ENCODE measurements at regions of chr9 and their contacts with region 1.

Region 1: GRCh38 chr9:101601904-101602765 is 7.4 kb upstream of the PPP3R2 start:
- DNase-seq: no peak
- ATAC-seq: no peak
- H3K4me3 Mint-ChIP-seq: no peak overlapping the region
- H3K27ac Mint-ChIP-seq: no peak overlapping the region
- H3K4me1 Mint-ChIP-seq: peaks cover 3% of the 10 kb centered on the region
- H3K27me3 Mint-ChIP-seq: peaks cover 7% of the 10 kb centered on the region

Region 2: DNA sequence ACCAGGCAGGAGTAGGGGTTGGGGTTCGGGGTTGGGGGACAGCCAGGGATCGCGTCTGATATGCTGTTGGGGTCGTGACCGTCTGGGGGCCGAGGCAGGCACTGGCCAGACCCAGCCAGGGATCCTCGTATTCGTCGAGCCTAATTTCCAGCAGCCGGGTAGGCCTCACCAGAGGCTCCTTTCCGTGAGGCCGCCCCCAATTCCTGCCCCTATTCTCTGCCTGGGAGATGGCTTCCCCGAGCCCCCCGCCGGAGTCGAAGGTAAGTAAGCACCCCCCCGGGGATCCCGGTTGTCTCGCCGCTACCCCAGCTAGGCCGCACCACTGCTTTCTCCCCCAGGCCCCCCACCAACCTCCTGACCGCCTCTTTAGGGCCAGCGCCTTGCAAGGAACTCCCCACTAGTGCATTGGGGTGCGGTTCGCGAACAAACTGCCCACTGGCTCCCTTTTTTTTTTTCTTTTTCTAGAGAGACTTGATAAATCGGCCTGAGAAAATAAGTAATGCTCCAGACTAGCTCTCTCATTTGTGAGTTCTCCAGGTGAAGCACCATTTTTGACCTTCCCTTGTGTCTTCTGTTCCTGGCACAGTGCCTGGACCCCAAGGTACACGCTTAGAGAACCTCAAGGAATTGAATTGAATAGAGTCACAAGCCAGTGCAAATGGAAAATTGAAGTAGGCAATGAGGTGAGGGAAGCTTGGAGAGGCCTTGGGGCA is 203.0 kb before region 1 on chr9:
- CTCF ChIA-PET with region 1: no interaction called
- POLR2A ChIA-PET with region 1: no interaction called
- intact Hi-C with region 1: no loop called
- DNase-seq: no peak
- ATAC-seq: peak; percentile 1
- H3K4me3 Mint-ChIP-seq: peak overlapping the region; percentile 94
- H3K27ac Mint-ChIP-seq: peak overlapping the region; percentile 100
- H3K4me1 Mint-ChIP-seq: peaks cover 67% of the 10 kb centered on the region
- H3K27me3 Mint-ChIP-seq: no peaks in the 10 kb centered on the region

Region 3: DNA sequence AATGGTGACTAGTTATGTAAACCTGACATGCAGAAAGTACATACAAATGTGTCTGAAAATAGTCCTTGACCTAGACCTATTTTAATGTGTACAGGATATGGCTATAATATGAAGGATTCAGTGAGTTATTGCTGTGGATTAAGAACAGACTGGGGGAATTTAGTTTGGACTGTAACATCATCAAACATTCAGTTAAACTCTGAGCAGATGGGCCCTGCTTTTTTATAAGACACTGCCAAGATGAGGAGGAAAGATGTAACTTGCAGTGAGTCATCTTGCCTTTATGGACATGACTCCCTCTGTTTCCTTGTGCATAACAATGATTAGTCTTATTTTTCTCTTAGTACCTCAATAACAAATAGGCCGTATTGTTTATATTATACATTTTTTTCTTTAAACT is 19.6 kb before region 1 on chr9:
- CTCF ChIA-PET with region 1: no interaction called
- POLR2A ChIA-PET with region 1: no interaction called
- intact Hi-C with region 1: no loop called
- DNase-seq: no peak
- ATAC-seq: no peak
- H3K4me3 Mint-ChIP-seq: no peak overlapping the region
- H3K27ac Mint-ChIP-seq: no peak overlapping the region
- H3K4me1 Mint-ChIP-seq: peaks cover 10% of the 10 kb centered on the region
- H3K27me3 Mint-ChIP-seq: peaks cover 6% of the 10 kb centered on the region

Region 4: DNA sequence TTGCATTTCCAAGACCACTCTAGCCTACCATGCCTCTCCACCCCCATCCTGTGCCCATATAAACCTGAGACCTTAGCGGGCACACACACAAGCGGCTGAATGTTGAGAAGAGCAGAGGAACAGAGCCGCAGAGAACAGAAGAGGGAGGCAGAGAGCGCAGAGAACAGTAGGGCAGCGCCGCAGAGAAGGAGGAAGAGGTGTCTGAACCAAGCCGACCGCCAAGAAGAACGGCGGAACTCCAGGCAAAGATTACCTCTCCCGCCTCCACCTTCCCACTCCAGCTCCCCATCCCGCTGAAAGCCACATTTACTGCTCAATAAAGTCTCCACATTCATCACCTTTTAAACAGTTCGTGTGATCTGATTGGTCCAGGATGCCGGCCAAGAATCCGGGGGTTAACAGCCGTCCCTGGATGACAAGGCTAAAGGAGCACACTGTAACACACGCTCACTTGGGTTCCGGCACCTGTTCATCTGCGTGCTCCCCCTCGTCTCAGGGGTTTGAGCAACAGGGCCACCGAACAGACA is 103.1 kb after region 1 on chr9:
- CTCF ChIA-PET with region 1: no interaction called
- POLR2A ChIA-PET with region 1: no interaction called
- intact Hi-C with region 1: loop called in 1 of 2 experiments (anchors 5 kb)
- DNase-seq: peak; percentile 54
- ATAC-seq: peak; percentile 92
- H3K4me3 Mint-ChIP-seq: peak overlapping the region; percentile 59
- H3K27ac Mint-ChIP-seq: no peak overlapping the region
- H3K4me1 Mint-ChIP-seq: peaks cover 4% of the 10 kb centered on the region
- H3K27me3 Mint-ChIP-seq: peaks cover 15% of the 10 kb centered on the region

Region 5: DNA sequence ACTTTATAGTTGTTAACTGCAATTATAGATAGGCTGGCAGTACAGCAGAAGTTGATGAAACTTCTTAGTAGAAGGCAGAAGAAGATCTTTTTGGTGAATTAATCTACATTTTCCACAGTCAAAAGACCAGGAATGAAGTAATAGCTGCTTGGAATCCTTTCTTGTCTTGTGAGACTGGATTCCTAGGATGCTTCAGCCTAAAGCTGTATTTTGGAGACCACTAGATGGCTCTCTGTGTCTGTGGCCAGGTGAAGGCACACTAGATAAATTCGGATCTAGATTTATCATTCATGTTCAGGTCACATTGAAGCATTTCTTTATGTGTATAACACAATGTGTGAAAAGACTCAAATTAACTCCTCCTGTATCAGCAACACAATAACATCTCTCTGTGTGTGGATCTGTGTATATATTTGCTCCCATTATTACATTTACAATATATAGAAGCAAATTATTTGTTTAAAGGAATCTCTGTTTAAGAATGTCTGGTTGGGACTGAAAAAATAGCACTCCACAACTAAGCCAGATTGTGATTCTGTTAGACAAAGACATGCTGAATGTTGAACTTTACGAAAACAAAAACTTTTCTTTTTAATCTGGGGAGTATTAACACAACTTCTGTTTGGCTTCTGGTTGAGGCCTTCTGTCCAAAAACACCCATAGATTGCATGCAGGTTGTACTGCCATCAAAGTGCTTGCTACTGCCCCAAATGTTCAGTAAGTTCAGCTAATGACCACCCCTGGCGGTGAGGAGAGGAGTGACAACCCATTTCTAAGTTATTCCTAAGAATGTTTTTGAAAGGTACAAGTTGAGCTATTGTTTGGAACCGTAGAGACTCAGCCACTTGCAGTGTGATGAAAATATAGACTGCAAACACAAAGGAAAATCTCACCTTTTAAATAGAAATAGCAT is 125.7 kb after region 1 on chr9:
- CTCF ChIA-PET with region 1: no interaction called
- POLR2A ChIA-PET with region 1: no interaction called
- intact Hi-C with region 1: loop called (anchors 1 to 5 kb)
- DNase-seq: peak; percentile 34
- ATAC-seq: no peak
- H3K4me3 Mint-ChIP-seq: no peak overlapping the region
- H3K27ac Mint-ChIP-seq: no peak overlapping the region
- H3K4me1 Mint-ChIP-seq: no peaks in the 10 kb centered on the region
- H3K27me3 Mint-ChIP-seq: peaks cover 15% of the 10 kb centered on the region

Region 6: DNA sequence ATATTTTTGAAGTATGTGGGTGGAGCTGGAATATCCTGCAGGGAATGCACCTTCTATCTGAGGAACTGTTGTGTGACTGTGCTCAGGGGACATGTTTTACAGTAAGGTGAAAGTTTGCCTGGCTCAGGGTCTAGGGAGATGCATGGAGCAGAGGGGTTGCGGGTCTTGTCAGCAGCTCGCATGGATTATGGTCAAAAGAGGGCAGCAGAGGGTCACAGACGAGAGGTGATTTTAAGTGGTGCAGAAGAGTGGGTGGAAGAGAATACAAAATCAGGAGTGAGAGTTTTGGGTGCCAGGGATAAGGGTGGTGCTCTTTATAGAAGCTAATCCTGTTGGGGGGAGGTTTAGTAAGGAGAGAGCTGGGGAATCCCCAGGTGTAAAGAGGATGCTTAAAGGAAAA is 189.8 kb after region 1 on chr9:
- CTCF ChIA-PET with region 1: no interaction called
- POLR2A ChIA-PET with region 1: no interaction called
- intact Hi-C with region 1: loop called in 1 of 2 experiments (anchors 10 kb)
- DNase-seq: peak; percentile 48
- ATAC-seq: no peak
- H3K4me3 Mint-ChIP-seq: no peak overlapping the region
- H3K27ac Mint-ChIP-seq: no peak overlapping the region
- H3K4me1 Mint-ChIP-seq: no peaks in the 10 kb centered on the region
- H3K27me3 Mint-ChIP-seq: no peaks in the 10 kb centered on the region

Region 7: GRCh38 chr9:101814064-101814463 is 211.9 kb after region 1 on chr9:
- CTCF ChIA-PET with region 1: no interaction called
- POLR2A ChIA-PET with region 1: no interaction called
- intact Hi-C with region 1: loop called in 1 of 2 experiments (anchors 10 kb)
- DNase-seq: no peak
- ATAC-seq: no peak
- H3K4me3 Mint-ChIP-seq: no peak overlapping the region
- H3K27ac Mint-ChIP-seq: no peak overlapping the region
- H3K4me1 Mint-ChIP-seq: no peaks in the 10 kb centered on the region
- H3K27me3 Mint-ChIP-seq: no peaks in the 10 kb centered on the region

Region 8: GRCh38 chr9:101977614-101978210 is 375.6 kb after region 1 on chr9:
- CTCF ChIA-PET with region 1: no interaction called
- POLR2A ChIA-PET with region 1: no interaction called
- intact Hi-C with region 1: loop called in 1 of 2 experiments (anchors 5 kb)
- DNase-seq: no peak
- ATAC-seq: no peak
- H3K4me3 Mint-ChIP-seq: no peak overlapping the region
- H3K27ac Mint-ChIP-seq: no peak overlapping the region
- H3K4me1 Mint-ChIP-seq: no peaks in the 10 kb centered on the region
- H3K27me3 Mint-ChIP-seq: no peaks in the 10 kb centered on the region

Measured in activated CD4-positive, alpha-beta T cell treated with anti-CD3 and anti-CD28 coated beads for 36 hours (primary cell).